Prostate gland (tissue), 2 donors: ENCODE measurements at regions of chr2 and their contacts with region 1.

Region 1: DNA sequence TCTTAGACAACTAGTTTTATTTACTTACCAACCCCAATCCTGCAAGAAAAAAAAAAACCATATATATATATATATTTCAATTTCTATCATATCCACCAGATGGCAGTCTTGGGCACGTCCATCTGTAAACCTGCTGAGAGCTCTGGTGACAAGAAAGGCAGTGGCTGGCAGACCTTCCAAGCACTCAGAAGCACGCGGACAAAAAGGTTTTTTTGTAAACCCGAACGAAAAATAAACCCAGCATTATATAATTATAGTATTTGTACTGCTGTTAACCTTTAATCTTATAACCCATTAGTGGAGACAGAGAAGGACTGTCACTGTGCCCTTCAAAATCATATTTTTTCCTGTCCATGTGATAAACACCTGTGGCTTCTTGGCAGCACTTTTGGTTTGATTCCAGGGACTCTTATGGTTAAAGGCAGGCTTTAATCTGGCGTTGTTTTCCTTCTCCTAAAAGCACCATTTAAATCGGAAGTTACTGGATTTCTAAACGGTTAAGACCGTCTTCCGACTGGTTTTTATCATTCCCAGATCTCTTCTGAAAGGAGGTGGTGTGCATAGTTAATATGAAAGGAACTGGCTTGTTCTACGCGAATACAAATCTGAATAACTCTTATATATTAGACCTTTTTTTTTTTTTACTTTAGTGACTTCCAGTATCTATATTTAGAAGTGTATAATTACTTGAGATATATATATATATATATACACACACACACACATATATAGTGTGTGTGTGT is 31.0 kb upstream of the SLC3A1 start:
- DNase-seq: peak; percentile 77
- H3K4me3 ChIP-seq: peak overlapping the region; percentile 1 to 23
- H3K27ac ChIP-seq: peak overlapping the region; percentile 43 to 44
- H3K4me1 ChIP-seq: no peaks in the 10 kb centered on the region
- H3K27me3 ChIP-seq: no peaks in the 10 kb centered on the region
- CTCF ChIP-seq: peak; percentile 36 to 73 (median 50)
- POLR2A ChIP-seq: no peak

Region 2: DNA sequence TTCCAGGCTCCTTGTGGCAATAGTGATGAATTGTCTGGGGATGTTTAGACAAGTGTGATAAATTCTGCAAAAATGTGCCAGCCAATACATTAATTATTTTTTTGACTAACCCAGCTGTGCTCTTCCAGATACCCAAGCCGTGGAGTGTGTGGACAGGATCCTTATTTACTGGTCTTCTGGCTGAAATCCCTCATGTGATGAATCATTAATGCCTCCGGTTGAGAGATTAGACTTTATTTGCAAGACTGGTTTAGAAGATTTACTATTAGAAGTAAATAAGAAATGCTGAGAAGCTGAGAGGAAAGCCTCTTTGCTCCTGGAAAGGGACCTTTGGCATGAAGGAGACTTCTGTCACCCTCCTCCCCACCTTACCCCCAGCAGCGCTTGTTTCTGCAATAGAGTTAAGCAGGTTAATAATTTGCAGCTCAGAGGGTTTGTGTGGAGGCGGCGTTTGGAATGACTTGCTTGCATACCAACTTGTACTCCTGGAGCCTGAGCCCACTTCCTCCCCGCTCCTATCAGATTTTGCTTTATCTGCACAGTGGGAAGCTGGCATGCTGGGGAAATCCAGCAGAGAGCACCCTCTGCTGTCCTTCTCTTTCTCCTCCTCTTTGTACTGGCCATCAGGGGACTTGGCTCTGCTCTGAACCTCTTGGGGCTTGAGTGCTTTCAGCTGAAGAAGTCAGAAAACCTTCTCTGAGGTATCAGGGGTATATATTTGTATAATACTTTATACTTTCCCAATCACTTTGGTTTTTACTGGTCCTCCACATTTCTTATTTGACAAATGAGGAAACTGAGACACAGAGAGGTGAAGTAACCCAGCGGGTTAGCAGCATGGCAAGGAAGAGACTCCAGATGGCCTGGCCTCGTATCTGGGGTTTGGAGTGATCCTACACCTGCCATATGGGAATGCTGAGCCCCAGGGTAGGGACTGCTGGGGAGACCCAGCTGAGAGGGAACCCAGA is 47.3 kb after region 1 on chr2:
- intact Hi-C with region 1: loop called (anchors 2 kb)
- DNase-seq: peak; percentile 75
- H3K4me3 ChIP-seq: no peak overlapping the region
- H3K27ac ChIP-seq: peak overlapping the region in 1 of 2 donors; percentile 29
- H3K4me1 ChIP-seq: no peaks in the 10 kb centered on the region
- H3K27me3 ChIP-seq: no peaks in the 10 kb centered on the region
- CTCF ChIP-seq: peak in 3 of 4 experiments; percentile 60 to 82 (median 76)
- POLR2A ChIP-seq: no peak

Region 3: GRCh38 chr2:44367591-44367990 is 123.3 kb after region 1 on chr2:
- intact Hi-C with region 1: no loop called
- DNase-seq: no peak
- H3K4me3 ChIP-seq: no peak overlapping the region
- H3K27ac ChIP-seq: no peak overlapping the region
- H3K4me1 ChIP-seq: no peaks in the 10 kb centered on the region
- H3K27me3 ChIP-seq: no peaks in the 10 kb centered on the region
- CTCF ChIP-seq: no peak
- POLR2A ChIP-seq: no peak

Region 4: DNA sequence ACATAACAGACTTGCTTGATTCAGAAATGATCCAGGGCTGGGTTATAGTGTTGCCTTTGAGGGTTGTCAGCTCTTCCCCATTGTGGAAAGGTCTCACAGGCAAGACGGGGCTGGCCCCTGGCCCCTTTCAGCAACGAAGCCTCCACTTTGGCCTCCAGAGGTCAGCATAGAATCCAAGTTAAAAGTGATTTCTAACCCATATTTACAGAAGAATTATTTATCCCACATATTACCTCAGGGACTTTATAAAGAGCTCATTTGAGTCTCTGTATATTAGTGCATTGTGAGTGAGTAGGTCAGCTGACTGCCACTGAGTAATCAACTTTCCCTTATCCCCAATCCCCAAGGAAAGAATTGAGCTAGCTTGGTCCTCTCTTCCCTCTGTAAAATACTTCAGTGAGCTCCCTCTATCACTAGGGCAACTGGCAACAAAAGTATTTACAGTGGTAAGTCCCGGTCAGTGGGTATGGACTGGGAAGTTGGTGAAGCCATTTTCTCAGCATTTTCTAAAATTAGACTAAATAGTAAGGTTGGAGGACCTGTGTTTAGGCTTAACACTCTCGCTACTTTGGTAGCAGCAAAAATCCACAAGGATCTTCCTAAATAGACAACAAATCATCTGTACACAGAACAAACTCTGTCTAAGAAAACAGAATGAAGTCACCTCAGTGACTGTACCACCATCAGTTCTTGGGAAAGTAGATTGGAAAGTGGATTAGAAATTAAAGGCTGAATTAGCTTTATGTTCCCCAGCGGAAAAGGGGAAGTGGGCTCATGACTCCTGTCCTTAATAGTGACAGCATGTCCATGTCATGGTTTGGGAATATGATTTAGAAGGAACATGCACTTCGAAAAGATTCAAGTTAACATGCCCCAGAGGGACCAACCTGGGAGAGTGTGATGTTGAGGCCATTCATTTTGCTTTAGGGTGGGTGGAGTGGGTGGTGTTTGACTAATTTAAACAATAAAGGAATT is 526.2 kb after region 1 on chr2:
- intact Hi-C with region 1: no loop called
- DNase-seq: no peak
- H3K4me3 ChIP-seq: no peak overlapping the region
- H3K27ac ChIP-seq: no peak overlapping the region
- H3K4me1 ChIP-seq: no peaks in the 10 kb centered on the region
- H3K27me3 ChIP-seq: no peaks in the 10 kb centered on the region
- CTCF ChIP-seq: no peak
- POLR2A ChIP-seq: no peak